Heart left ventricle (tissue), 16 donors: ENCODE measurements at regions of chr21 and their contacts with region 1.

Region 1: DNA sequence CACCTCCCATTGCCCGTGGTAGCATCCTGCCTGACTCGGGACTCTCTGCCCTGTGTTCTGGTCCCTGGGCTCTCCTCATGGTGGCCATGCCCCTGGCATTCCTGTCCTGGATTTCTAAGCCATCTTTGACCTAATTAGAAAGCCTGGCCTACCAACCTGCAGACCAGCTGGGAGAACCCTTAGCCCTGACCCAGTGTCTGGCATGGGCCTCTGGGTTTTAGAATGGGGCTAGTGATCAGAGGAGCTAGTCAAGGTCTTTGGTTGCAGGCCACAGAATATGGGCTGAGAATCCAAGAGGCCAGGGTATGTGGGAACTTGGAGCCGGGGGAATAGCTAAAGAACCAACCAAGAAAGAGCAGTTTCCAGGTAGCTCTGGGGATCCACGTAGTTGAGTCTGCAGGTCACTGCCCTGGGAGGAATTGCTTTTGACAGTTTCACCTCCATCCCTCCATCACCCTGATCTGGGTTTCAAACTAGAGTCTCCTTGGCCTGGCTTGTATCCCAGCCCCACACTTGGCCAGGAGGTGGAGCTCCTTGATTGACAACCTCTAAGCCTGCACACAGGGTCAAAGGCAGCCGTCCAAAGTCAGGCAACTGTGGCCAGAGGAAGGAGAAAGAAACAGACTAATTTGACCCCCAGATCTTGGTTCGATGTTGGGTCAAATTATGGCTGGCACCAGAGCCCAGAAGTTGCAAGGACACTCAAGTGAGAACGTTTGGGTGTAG is 54.7 kb upstream of the ABCG1 start:
- DNase-seq: peak; percentile 68 to 82 (median 75)
- ATAC-seq: peak; percentile 83 to 92 (median 88)
- H3K4me3 ChIP-seq: no peak overlapping the region
- H3K27ac ChIP-seq: peak overlapping the region in 2 of 12 donors; percentile 2 to 17
- H3K4me1 ChIP-seq: peaks cover 0 to 9% (median 0%) of the 10 kb centered on the region in 12 donors
- H3K27me3 ChIP-seq: peaks cover 0 to 4% (median 0%) of the 10 kb centered on the region in 9 donors
- CTCF ChIP-seq: peak; percentile 51 to 75 (median 64)
- POLR2A ChIP-seq: no peak

Region 2: DNA sequence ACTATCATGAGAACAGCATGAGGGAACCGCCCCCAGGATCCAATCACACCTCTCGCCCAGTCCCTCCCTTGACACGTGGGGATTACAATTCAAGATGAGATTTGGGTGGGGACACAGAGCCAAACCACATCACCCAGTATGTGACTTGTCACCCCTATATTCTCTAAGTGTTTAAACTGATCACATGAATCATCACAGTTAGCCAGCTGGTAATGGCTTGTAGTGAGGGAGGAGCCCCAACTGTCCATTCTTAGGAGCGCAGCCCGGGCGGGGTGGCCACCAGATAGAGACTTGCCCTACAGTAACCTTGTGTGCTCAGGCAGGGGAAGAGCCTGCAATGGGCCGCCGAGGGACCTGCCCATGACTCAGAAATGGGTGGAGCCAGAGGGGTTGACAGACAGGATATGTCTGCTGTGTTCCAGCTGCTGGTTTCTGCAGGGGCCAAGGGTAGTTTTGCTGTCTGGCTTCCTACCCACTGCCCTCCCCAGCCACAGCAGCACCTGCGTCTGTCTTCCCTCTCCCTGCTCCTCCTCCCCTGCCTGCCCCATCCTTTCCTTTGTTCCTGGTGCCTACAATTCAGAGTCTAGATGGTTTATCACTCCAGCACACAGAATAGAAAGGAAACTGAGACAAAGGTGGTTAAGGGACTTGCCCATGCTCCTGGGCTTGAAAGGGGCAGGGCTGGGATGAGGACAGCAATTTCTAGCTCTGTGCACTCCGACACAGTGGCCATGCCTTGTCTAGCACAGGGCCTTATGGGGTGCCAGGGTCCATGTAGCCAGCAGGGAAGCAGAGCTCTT is 63.9 kb after region 1 on chr21:
- intact Hi-C with region 1: loop called in 2 of 10 experiments (anchors 10 kb)
- DNase-seq: peak; percentile 89 to 97 (median 95)
- ATAC-seq: peak; percentile 96 to 99 (median 98)
- H3K4me3 ChIP-seq: peak overlapping the region in 1 of 12 donors; percentile 10
- H3K27ac ChIP-seq: peak overlapping the region; percentile 13 to 74 (median 54)
- H3K4me1 ChIP-seq: peaks cover 10 to 63% (median 54%) of the 10 kb centered on the region in 12 donors
- H3K27me3 ChIP-seq: no peaks in the 10 kb centered on the region
- CTCF ChIP-seq: no peak
- POLR2A ChIP-seq: no peak

Region 3: GRCh38 chr21:42258153-42258884 is 94.1 kb after region 1 on chr21:
- intact Hi-C with region 1: loop called (anchors 1 to 10 kb)
- DNase-seq: peak; percentile 69 to 89 (median 76)
- ATAC-seq: peak; percentile 63 to 75 (median 64)
- H3K4me3 ChIP-seq: no peak overlapping the region
- H3K27ac ChIP-seq: no peak overlapping the region
- H3K4me1 ChIP-seq: peaks cover 2 to 67% (median 30%) of the 10 kb centered on the region in 12 donors
- H3K27me3 ChIP-seq: no peaks in the 10 kb centered on the region
- CTCF ChIP-seq: peak; percentile 69 to 88 (median 78)
- POLR2A ChIP-seq: no peak

Region 4: DNA sequence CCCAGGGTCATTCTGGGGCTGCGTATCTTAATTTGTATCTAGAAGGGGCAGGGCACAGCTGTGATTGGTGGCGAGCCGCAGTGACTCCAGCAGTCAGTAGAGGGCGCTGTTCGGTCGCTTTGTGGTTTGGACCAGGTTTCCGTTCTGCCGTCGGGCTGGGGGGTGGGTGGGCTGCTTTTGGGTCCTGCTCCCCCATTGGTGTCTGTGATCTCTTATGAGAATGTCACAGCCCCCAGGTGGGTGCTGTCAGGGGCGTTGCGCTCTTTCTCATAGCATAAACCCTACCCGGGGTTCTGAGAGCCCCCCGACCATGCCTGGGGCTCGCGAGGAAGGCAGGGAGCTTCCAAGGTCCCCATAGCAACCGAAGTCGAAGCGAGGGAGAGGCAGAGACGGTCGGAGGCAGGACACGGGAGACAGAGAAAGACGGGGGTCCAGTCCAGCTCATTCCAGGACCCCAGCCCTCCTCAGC is 145.6 kb after region 1 on chr21:
- intact Hi-C with region 1: loop called in 2 of 10 experiments (anchors 5 to 10 kb)
- DNase-seq: peak in 1 of 5 donors; percentile 52
- ATAC-seq: peak; percentile 6 to 68 (median 48)
- H3K4me3 ChIP-seq: no peak overlapping the region
- H3K27ac ChIP-seq: no peak overlapping the region
- H3K4me1 ChIP-seq: peaks cover 0 to 30% (median 15%) of the 10 kb centered on the region in 12 donors
- H3K27me3 ChIP-seq: peaks cover 0 to 30% (median 3%) of the 10 kb centered on the region in 9 donors
- CTCF ChIP-seq: peak; percentile 58 to 76 (median 71)
- POLR2A ChIP-seq: no peak

Region 5: DNA sequence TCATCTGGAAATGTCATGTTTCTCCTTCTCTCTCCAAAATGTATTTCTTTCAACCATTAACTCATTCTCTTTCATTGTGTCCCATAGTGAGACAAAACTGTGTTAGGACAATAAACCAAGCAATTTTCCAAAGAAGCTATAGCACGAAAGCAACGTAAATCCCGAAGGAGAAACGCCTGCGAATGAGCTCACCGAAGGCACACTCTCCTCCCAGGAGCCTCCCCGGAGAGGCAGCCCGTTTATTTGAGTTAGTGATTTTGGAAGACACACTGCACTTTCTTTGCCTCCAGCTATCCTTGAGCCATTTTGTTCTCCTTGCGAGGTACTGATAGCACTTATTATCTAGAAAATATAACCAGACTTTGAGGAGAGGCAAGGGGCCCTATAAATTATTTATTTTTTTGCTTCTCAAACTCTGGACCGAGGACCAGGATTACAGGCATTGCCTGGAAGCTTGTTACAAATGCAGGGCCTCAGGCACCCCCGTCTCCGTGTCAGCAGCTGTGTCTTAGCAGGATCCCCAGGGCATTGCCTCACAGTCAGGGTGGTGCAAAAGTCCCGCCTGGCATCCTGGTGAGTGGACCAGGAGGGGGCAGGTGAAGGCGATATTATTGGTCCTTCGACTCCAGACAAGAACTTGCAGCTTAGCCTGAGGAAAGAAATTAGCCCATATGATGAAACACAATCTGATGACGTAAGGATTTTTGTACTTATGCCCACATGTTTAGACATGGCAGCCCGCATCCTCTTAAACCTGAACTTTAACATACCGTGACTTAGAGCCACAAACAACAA is 290.8 kb after region 1 on chr21:
- intact Hi-C with region 1: loop called in 5 of 10 experiments (anchors 1 to 5 kb)
- DNase-seq: no peak
- ATAC-seq: no peak
- H3K4me3 ChIP-seq: no peak overlapping the region
- H3K27ac ChIP-seq: no peak overlapping the region
- H3K4me1 ChIP-seq: peaks cover 0 to 6% (median 0%) of the 10 kb centered on the region in 12 donors
- H3K27me3 ChIP-seq: peaks cover 0 to 14% (median 0%) of the 10 kb centered on the region in 9 donors
- CTCF ChIP-seq: no peak
- POLR2A ChIP-seq: no peak